Activated naive CD4-positive, alpha-beta T cell treated with anti-CD3 and anti-CD28 coated beads, Interleukin-2, amount 10 ng/mL, durations not matched to agents 7 days and 5 days (primary cell): ENCODE measurements at regions of chr16 and their contacts with region 1.

Region 1: GRCh38 chr16:85253084-85253941 is 141.0 kb upstream of the CIBAR2 start:
- DNase-seq: peak; percentile 75
- H3K4me3 Mint-ChIP-seq: no peak overlapping the region
- H3K27ac Mint-ChIP-seq: peak overlapping the region; percentile 45
- H3K4me1 Mint-ChIP-seq: peaks cover 7% of the 10 kb centered on the region
- H3K27me3 Mint-ChIP-seq: peaks cover 23% of the 10 kb centered on the region

Region 2: DNA sequence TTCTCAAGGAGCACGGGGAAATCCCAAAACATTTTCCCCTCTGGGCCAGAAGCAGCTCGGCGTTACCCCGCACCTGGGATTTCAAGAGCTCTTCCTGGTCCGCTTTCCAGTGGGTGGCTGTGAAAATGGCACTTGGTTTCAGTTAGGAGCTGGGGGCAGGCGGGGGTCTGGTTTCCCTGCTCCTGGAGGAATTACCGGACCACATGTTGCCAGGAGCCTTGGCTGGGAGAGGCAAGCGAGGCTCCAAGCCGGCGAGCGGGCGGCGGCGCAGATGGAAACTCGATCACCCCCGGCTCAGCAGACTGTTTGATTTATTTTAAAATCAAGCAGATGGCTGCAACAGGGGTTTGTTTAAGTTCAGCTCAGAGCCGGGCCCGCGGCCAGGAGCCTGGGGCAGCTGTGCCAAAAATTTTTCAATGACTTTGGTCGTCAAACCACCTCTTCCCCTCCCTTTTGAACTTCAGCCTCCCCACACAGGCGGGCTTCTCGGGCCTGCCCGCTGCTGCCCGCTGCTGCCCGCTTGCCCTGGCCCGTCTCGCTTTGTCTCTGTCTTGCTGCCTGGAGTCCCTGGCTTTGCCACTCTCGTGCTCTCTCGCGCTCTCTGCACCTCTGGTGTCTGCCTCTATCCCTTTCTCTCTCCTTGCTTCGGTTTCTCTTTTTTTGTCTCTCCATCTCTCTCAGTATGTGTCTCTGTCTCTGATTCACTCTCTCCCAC is 33.0 kb before region 1 on chr16:
- CTCF ChIA-PET with region 1: no interaction called
- DNase-seq: no peak
- H3K4me3 Mint-ChIP-seq: no peak overlapping the region
- H3K27ac Mint-ChIP-seq: no peak overlapping the region
- H3K4me1 Mint-ChIP-seq: no peaks in the 10 kb centered on the region
- H3K27me3 Mint-ChIP-seq: peaks cover 7% of the 10 kb centered on the region

Region 3: GRCh38 chr16:85266857-85267256 is 13.5 kb after region 1 on chr16:
- CTCF ChIA-PET with region 1: interaction called, 27 read pairs
- DNase-seq: no peak
- H3K4me3 Mint-ChIP-seq: no peak overlapping the region
- H3K27ac Mint-ChIP-seq: no peak overlapping the region
- H3K4me1 Mint-ChIP-seq: no peaks in the 10 kb centered on the region
- H3K27me3 Mint-ChIP-seq: peaks cover 25% of the 10 kb centered on the region

Region 4: DNA sequence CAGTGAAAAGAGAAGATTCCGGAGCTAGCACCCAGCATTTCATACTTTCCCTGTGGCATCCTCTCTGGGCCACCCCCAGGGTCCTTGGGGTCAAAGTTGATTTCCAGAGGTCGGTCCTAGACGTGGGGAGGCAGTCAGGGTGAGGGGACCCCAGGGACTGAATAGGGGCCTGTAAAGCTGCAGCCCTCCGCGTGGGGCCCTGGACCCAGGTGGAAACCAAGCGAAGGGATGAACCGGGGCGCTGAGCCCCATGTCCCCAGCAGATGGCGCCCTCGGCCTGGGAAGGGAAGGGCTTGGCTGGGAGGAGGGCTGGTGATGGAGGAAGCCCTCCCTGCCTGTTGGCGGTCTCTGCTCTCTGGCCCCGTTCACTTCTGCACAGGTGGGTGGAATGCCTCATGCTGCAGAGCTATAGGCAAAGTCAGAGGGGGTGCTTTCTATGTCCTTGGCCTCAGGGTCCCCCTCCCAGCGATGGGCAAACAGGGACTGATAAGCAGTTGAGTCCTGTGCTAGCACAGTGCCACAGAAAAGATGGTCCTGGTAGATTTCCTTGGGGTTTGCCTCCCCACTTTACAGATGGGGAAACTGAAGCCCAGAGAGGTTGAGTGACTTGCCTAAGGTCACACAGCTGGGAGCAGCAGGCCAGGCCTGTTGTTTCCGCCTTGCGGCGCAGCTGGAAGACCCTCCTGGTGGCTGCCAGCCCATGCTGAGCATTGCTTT is 22.4 kb after region 1 on chr16:
- CTCF ChIA-PET with region 1: interaction called, 10 read pairs
- DNase-seq: peak; percentile 81
- H3K4me3 Mint-ChIP-seq: no peak overlapping the region
- H3K27ac Mint-ChIP-seq: no peak overlapping the region
- H3K4me1 Mint-ChIP-seq: no peaks in the 10 kb centered on the region
- H3K27me3 Mint-ChIP-seq: peaks cover 8% of the 10 kb centered on the region